OCI-LY7 (cell line): ENCODE measurements at regions of chr20 and their contacts with region 1.

Region 1: GRCh38 chr20:50569864-50570836 is 60.0 kb downstream of the PTPN1 start:
- DNase-seq: peak; percentile 38
- H3K4me3 ChIP-seq: no peak overlapping the region
- H3K27ac ChIP-seq: no peak overlapping the region
- H3K4me1 ChIP-seq: no peaks in the 10 kb centered on the region
- CTCF ChIP-seq: peak; percentile 62

Region 2: DNA sequence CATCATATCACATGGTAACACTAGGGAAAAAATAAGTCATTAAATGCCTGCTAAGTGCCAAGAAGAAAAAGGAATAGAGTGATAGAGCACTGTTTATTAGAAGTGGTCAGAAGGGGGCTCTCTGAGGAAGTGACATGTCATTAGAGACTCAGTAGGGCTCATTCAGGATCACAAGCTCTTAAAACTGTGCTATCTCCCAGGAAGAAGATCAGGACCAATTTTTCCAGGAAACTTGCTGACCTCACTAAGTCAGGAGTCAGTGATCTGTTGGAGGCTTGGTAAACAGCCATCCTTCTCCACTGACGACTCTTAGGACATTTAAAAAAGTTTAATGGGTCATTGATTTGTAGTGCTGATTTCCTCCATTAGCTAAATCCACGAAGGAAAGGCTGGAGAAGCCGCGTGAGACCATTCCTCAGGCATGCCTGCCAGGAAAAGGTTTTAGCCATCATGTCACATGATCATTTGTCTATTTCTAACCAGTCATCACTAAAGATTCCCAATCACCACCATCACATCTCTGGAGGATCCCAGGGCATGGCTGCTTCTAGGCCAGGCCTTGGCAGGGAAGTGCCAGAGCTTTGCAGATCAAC is 65.8 kb before region 1 on chr20:
- CTCF ChIA-PET with region 1: no interaction called
- POLR2A ChIA-PET with region 1: interaction called, 3 read pairs
- intact Hi-C with region 1: loop called (anchors 2 kb)
- DNase-seq: peak; percentile 41
- H3K4me3 ChIP-seq: no peak overlapping the region
- H3K27ac ChIP-seq: no peak overlapping the region
- H3K4me1 ChIP-seq: peaks cover 2% of the 10 kb centered on the region
- CTCF ChIP-seq: peak; percentile 72